Cardiac septum (tissue), 1 donor: ENCODE measurements at regions of chr7 and their contacts with region 1.

Region 1: DNA sequence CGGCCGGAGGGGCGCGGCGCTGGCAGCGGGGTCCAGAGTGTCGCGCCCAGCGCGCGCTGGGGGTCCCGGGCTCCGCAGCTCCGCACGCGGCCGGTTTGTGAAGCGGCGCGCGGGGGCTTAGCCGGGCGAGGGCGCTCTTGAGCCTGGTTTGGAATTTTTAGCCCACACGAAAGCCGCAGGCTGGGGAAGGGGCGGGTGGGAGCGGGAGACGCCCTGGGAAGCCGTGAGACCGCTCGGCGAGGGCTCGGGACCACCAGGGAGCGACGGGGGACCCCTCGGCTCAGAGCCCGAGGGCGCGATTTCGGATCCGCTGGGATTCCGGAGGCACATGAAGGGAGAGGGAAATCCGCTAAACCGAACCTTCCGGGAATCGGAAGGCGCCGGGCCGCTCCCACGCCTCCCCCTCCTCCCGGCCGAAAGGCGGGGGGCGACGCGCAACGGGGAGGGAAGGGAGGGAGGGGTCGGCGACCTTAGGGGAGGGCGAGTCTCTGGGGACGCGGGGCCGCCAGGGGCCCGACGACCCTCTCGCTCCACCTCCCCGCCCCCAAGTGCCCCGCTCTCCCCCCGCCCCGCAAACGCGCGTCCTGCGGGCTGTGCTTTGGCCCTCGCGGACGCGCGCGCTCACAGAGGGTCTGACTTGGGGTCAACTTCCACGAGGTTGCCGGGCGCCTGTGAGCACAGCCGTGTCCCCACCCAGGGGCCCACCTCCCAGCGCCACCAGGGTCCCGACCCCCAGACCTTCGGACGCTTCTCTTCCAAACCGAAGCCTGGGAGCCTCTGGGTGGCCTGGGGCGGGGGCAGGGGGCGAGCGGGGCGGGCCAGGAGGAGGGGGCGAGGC is 5.1 kb upstream of the ELFN1 start:
- DNase-seq: peak; percentile 78

Region 2: DNA sequence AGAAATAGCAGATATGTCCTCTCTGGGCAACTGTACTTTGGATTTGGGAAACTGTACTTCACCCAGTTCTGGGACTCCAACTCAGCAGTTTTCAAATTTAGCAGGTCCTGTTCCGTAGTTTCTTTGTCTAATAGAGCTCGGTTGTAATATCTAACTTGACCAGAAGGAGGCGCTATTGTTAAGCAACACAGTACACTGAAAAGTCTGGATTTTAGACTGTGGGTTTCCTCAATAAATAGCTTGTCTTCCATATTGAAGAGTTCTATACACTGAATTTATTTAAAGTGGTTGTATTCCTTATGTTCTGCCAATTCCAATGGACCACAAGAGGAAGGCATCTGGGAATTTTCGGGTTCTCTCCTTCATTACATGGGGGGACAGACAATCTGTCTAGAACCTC is 45.0 kb after region 1 on chr7:
- intact Hi-C with region 1: loop called (anchors 5 kb)
- DNase-seq: no peak

Region 3: GRCh38 chr7:1758028-1758858 is 93.3 kb after region 1 on chr7:
- intact Hi-C with region 1: loop called (anchors 2 kb)
- DNase-seq: peak; percentile 80

Region 4: DNA sequence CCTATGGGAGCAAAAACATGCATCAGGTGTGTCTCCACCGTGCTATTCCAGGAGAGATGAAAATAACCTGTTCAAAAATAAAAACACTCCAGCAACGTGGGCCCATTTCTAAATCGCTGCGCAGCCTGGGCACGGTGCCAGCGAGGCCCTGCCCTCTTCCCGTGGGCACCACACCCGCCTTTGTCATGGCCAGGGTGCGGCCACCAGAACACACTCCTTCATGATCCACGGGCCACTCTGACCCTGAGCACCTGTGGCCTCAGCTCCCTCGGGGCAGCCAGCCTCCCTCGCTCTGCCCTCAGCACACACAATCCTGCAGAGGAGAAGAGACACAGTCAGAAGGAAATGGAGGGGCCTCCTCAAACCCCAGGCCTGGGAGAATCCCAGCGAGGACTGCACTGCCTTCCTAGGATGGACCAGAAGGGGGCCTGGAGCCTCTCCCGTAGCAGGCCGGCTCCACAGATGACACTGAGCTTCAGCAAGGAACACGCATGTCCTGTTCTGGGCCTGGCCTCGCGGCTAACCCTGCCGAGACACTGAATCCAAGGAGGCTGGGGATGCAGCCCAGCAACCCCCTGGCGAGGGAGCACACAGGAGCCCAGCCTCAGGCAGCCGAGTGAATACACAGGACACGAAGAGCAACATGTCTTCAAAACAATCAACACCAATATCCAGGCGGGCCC is 398.8 kb after region 1 on chr7:
- intact Hi-C with region 1: no loop called
- DNase-seq: no peak

Region 5: GRCh38 chr7:2209146-2209960 is 544.4 kb after region 1 on chr7:
- intact Hi-C with region 1: loop called (anchors 5 kb)
- DNase-seq: no peak